ENCODE measurements at regions of chr2 and their contacts with region 1.

Region 1: GRCh38 chr2:26964446-26965130 is 5.8 kb upstream of the MAPRE3 start:
- DNase-seq: no peak
- ATAC-seq: no peak
- H3K4me3 ChIP-seq: no peak overlapping the region
- H3K27ac ChIP-seq: no peak overlapping the region
- H3K4me1 ChIP-seq: peaks cover 12% of the 10 kb centered on the region; the same call in 2 of the 3 replicates
- CTCF ChIP-seq: no peak
- EP300 ChIP-seq: no peak
- POLR2A ChIP-seq: no peak
- RAD21 ChIP-seq: no peak

Region 2: GRCh38 chr2:26933431-26934334 is 30.9 kb before region 1 on chr2:
- CTCF ChIA-PET with region 1: interaction called, 42 read pairs
- POLR2A ChIA-PET with region 1: no interaction called
- DNase-seq: no peak
- ATAC-seq: peak in 1 of 2 experiments; percentile 42; a peak in 3 of 6 replicates
- H3K4me3 ChIP-seq: no peak overlapping the region
- H3K27ac ChIP-seq: no peak overlapping the region
- H3K4me1 ChIP-seq: no peaks in the 10 kb centered on the region
- CTCF ChIP-seq: no peak
- EP300 ChIP-seq: no peak
- POLR2A ChIP-seq: no peak
- RAD21 ChIP-seq: no peak